ENCODE measurements at regions of chr1 and their contacts with region 1.

Region 1: GRCh38 chr1:231757101-231757404 is 130.5 kb downstream of the DISC1 start:
- DNase-seq: no peak
- H3K4me3 ChIP-seq: peak overlapping the region in 3 of 59 donors; percentile 5 to 12 (median 6)
- H3K27ac ChIP-seq: no peak overlapping the region
- H3K27me3 ChIP-seq: no peaks in the 10 kb centered on the region
- CTCF ChIP-seq: peak in 23 of 56 donors; percentile 0 to 53 (median 33)

Region 2: DNA sequence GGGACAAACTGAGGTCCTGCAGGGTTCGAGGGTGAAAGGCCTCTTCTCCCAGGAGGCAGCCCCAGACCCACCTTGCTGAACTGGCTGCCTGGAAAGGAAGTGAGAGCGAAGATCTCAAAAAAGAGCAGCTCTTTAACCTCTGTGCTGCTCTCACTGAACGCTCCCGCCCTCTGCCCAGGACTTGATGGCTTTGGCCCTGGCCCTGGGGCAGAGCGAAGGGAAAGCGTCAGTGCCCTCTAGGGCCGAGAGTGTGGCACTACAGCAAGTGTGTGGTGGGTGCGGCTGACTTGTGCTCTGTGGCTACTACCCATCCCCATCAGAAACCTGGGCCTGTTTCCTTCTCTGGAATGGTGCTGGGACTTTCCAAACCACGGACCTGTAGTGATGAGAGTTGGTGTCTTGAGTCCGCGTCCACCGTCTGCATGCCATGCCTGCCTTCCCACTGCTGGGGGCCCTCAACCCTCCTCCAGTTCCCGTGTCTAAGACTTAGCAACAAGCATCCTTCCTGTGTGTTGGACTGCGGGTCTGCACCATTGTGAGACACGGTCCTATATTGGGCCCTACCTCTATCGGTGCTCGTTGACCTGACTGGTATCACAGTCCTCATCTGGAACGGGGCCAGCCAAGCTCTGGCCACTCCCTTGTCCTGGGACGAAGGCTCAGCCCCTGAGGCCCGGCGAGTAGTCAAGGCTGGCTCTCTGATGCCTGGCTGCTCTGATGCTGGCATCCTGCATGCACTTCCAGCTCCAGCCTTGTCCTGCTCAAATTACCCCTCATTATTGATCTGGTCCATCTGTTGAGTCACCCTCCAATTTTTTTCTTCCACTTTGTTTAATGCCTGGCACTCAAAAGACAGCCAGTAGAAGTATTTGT is 49.8 kb after region 1 on chr1:
- intact Hi-C with region 1: loop called in 1 of 2 experiments (anchors 2 kb)
- DNase-seq: peak in 9 of 10 donors; percentile 21 to 69 (median 51)
- H3K4me3 ChIP-seq: no peak overlapping the region
- H3K27ac ChIP-seq: peak overlapping the region in 4 of 59 donors; percentile 2 to 44 (median 16)
- H3K27me3 ChIP-seq: no peaks in the 10 kb centered on the region
- CTCF ChIP-seq: peak in 55 of 56 donors; percentile 7 to 75 (median 61)

Region 3: GRCh38 chr1:233240829-233241682 is 1484.0 kb after region 1 on chr1:
- intact Hi-C with region 1: loop called in 1 of 2 experiments (anchors 5 kb)
- DNase-seq: peak; percentile 47 to 79 (median 70)
- H3K4me3 ChIP-seq: peak overlapping the region in 27 of 59 donors; percentile 4 to 49 (median 29)
- H3K27ac ChIP-seq: no peak overlapping the region
- H3K27me3 ChIP-seq: no peaks in the 10 kb centered on the region
- CTCF ChIP-seq: peak in 55 of 56 donors; percentile 26 to 90 (median 79)